ENCODE measurements at regions of chr7 and their contacts with region 1.

Region 1: DNA sequence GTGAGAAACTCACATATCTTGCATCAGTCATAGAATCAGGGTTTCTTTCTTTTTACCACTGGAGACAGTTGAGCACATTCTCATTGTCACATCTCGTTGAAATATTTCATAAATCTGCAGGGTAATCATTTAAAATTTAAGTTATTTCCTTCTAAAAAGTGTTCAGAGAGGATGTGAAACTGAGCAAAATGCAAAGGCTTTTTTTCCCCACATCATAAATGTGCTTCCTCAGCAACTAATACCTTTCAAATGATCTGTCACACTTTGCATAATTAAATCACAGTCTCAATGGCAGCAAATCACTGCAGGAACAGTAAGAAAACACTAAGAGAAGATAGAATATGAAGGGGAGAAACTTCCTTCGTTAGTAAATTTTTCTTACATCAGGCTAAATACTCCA is 187.5 kb downstream of the EVX1 start:
- DNase-seq: no peak
- ATAC-seq: no peak

Region 2: GRCh38 chr7:26976840-26977239 is 453.3 kb before region 1 on chr7:
- intact Hi-C with region 1: no loop called
- DNase-seq: no peak
- ATAC-seq: no peak

Region 3: DNA sequence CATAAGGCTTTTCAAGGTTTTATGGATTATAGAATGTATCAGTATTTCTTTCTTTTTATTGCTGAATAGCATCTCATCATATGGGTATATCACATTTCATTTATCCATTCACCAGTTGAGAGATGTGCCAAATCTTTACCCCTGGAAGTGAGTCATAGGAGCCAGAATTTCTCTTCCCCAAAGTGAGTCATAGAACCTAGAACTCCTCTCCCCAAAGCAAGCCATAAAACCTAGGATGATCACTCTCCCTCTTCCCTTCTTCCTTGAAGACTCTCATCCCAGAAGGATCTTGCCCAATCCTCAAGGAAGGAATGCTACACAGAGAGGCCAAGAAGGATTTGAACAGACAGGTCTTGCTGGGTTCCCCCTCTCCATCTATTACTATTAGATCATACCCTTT is 12.3 kb after region 1 on chr7:
- intact Hi-C with region 1: loop called in 1 of 2 experiments (anchors 1 kb)
- DNase-seq: no peak
- ATAC-seq: no peak

Region 4: GRCh38 chr7:27491491-27491890 is 61.4 kb after region 1 on chr7:
- intact Hi-C with region 1: no loop called
- DNase-seq: no peak
- ATAC-seq: no peak

Measured in left cardiac atrium (tissue), 4 donors.